Cardiac septum (tissue), 1 donor: ENCODE measurements at regions of chr12 and their contacts with region 1.

Region 1: DNA sequence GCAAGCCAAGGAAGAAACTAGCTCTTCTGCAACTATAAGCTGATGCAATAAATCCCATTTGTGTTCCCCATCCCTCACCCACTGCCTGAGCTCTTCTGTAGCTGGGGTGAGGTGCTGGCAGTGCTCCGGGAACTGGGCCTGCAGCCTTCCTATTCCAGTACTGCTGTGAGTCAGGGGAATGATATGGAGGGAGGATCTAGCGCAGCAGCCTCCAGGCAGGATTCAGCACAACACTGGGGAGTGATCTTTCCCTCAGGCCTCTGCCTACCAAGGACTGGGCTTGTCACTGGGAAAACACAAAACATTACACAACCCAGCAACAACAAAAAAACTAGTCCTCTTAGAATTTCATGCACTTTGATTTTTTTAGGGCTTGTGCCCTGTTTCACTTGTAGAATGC is 58.7 kb downstream of the ST8SIA1 start:
- DNase-seq: peak; percentile 81

Region 2: GRCh38 chr12:22312336-22312735 is 36.5 kb after region 1 on chr12:
- intact Hi-C with region 1: loop called (anchors 5 kb)
- DNase-seq: no peak